Left colon (tissue), 2 donors: ENCODE measurements at regions of chr3 and their contacts with region 1.

Region 1: DNA sequence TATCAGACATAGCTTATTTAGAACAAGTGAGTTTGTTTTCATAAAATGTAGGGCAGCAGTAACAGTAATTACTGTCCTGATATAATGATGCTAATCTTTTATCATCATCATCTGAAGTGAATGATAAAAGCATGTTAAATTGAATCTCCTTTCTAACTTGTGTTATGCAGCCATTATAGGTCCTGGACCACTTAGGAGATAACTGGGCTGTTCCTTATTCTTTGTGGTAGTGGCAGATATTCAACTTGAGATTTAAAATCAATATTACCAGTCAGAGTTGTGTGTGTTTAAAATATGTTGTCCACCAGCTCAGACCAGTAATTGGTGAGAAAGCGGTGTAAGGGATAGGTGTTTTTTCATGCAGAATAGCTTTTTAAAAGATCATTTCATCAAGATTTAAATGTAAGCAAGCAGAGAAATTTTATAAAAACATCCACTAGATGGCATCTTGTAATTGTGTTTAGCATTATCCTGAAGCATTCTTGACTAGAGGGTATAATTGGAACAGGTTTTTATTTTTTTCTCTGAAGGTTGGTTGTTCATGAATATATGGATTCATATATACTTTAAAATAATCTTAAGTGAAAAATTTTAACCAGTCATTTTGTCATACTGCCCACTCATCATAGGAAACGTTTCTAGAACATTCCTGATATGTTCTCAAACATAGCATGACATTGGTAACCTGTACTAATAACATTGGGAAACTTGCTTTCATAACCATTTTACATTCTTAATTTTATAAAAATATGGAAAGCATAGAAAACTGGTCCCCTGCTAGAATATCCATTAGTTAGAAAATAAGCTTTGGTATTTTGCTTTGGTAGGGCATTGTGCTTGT is 153.9 kb downstream of the BBX start:
- DNase-seq: no peak
- ATAC-seq: peak; percentile 49

Region 2: GRCh38 chr3:107727102-107727501 is 50.4 kb after region 1 on chr3:
- intact Hi-C with region 1: no loop called
- DNase-seq: no peak
- ATAC-seq: no peak

Region 3: DNA sequence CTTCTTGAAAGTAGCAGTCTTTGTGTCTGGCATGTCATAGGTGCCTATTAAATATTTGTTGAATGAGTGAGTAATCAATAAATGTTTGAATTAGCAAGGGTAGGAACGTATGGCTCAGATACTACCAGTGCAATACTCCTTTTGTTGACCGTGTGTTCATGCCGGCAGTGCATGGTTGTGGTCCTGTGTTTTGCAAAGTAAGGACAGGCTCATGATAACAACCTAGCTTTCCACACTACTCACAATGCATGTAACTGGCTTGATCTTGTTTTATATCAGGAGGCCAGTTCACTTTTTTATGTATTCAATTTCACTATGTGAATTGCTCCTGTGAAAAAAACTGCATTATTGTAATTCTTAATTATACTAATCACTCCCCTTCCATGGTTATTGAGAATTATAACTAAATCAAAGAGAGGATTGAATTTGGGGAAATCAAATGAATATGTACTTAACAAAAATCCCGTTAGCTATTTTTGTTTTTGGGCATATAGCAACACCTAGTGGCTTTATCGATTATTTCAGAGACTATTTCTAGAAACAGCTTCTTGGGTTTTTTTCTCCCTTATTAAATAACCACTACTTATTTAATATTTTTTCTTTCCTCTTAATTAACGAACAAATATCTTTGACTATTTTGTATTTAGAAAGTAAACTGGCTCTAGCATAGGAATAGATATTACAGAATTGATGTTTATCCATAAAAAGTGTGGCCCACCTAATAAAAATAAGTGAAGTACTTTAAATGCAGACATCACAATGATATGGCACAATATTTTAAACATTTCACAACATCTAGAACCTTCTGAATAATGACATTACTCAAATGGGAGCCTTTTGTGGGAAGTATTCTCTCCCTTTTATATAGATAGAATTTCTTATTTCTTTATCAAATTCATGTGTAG is 64.6 kb after region 1 on chr3:
- intact Hi-C with region 1: loop called in 1 of 2 experiments (anchors 10 kb)
- DNase-seq: no peak
- ATAC-seq: no peak